ENCODE measurements at regions of chr10 and their contacts with region 1.

Region 1: GRCh38 chr10:123132576-123133477 is 2.9 kb upstream of the HMX3 start:
- DNase-seq: peak; percentile 81 to 84
- ATAC-seq: peak in 7 of 8 donors; percentile 71 to 92 (median 87)
- H3K4me3 ChIP-seq: peak overlapping the region in 8 of 10 donors; percentile 9 to 39 (median 30)
- H3K27ac ChIP-seq: no peak overlapping the region
- H3K4me1 ChIP-seq: peaks cover 25 to 53% (median 49%) of the 10 kb centered on the region in 9 donors
- H3K27me3 ChIP-seq: peaks cover 65 to 100% (median 99%) of the 10 kb centered on the region in 7 donors
- CTCF ChIP-seq: peak; percentile 86 to 95 (median 93)

Region 2: DNA sequence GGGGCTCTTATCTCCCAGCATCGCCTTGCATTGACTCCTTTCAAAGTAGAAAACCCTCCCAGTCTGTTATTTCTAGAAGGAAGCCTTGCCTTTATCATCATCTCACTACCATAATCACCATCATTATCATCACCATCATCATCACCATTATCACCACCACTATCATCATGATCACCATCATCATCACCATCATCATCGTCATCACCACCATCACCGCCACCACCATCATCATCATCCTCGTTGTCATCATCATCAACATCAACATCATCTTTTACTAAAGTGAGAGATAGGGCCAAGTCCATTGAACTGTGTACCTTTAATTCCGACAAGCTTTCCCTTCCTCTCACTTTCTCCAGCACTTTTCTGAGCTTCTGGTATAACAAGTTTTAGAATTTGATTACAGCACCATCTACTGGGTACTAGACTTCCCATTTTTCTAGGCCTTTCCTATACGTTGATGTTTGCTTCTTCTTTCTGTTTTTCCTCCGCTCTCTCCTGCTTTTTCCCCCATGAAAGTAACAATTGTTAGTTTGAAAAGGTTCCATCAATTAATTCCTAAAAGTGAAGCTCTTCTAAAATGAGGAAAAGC is 247.8 kb after region 1 on chr10:
- intact Hi-C with region 1: loop called in 2 of 10 experiments (anchors 10 kb)
- DNase-seq: no peak
- ATAC-seq: no peak
- H3K4me3 ChIP-seq: no peak overlapping the region
- H3K27ac ChIP-seq: no peak overlapping the region
- H3K4me1 ChIP-seq: no peaks in the 10 kb centered on the region
- H3K27me3 ChIP-seq: peaks cover 0 to 11% (median 3%) of the 10 kb centered on the region in 7 donors
- CTCF ChIP-seq: peak in 2 of 9 donors; percentile 18 to 32

Region 3: GRCh38 chr10:123967396-123968243 is 834.8 kb after region 1 on chr10:
- intact Hi-C with region 1: loop called in 2 of 10 experiments (anchors 10 kb)
- DNase-seq: peak; percentile 64 to 72
- ATAC-seq: peak; percentile 64 to 88 (median 74)
- H3K4me3 ChIP-seq: peak overlapping the region in 2 of 10 donors; percentile 4 to 7
- H3K27ac ChIP-seq: no peak overlapping the region
- H3K4me1 ChIP-seq: peaks cover 0 to 10% (median 2%) of the 10 kb centered on the region in 9 donors
- H3K27me3 ChIP-seq: peaks cover 7 to 81% (median 75%) of the 10 kb centered on the region in 7 donors
- CTCF ChIP-seq: peak; percentile 61 to 93 (median 90)